ENCODE measurements at regions of chr11 and their contacts with region 1.

Region 1: GRCh38 chr11:47932544-47932943 is 47.8 kb upstream of the PTPRJ start:
- DNase-seq: no peak
- H3K4me3 ChIP-seq: no peak overlapping the region
- H3K27ac ChIP-seq: no peak overlapping the region
- H3K27me3 ChIP-seq: no peaks in the 10 kb centered on the region
- CTCF ChIP-seq: no peak

Region 2: GRCh38 chr11:47917643-47918369 is 14.7 kb before region 1 on chr11:
- CTCF ChIA-PET with region 1: interaction called, 10 read pairs
- POLR2A ChIA-PET with region 1: interaction called, 4 read pairs
- DNase-seq: peak; percentile 98
- H3K4me3 ChIP-seq: peak overlapping the region; percentile 50
- H3K27ac ChIP-seq: peak overlapping the region; percentile 92
- H3K27me3 ChIP-seq: no peaks in the 10 kb centered on the region
- CTCF ChIP-seq: no peak

Region 3: DNA sequence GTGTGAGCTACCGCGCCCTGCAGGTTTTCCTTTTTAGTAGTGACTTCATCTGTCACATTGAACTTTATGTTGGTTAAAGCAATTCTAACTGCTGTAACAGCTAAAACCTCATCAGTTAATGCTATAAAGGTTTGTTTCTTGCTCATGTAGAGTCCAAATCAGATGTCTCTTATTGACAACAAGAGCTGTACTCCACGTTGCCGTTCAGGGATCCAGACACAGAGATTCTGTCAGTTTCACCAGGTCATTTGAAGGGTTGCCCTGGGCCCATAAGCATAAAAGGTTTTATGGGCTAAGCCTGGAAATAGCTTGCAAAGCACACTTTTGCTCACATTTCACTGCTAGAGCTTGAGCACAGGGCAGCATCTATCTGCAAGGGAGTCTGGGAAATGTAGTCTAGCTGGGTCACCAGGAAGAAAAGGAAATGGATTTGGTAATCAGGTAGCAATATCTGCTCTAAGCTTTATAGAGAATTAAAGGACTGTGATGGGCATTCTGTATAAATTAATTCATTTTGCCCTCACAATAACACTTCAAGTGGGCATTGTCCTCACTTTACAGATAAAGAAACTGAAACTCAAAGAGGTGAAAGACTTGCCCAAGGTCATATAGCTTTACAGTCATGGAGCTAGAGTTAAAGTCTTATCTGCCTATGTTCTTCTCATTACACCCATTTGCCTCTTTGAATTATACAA is 22.7 kb after region 1 on chr11:
- CTCF ChIA-PET with region 1: interaction called, 14 read pairs
- POLR2A ChIA-PET with region 1: no interaction called
- DNase-seq: no peak
- H3K4me3 ChIP-seq: no peak overlapping the region
- H3K27ac ChIP-seq: no peak overlapping the region
- H3K27me3 ChIP-seq: no peaks in the 10 kb centered on the region
- CTCF ChIP-seq: no peak

Region 4: DNA sequence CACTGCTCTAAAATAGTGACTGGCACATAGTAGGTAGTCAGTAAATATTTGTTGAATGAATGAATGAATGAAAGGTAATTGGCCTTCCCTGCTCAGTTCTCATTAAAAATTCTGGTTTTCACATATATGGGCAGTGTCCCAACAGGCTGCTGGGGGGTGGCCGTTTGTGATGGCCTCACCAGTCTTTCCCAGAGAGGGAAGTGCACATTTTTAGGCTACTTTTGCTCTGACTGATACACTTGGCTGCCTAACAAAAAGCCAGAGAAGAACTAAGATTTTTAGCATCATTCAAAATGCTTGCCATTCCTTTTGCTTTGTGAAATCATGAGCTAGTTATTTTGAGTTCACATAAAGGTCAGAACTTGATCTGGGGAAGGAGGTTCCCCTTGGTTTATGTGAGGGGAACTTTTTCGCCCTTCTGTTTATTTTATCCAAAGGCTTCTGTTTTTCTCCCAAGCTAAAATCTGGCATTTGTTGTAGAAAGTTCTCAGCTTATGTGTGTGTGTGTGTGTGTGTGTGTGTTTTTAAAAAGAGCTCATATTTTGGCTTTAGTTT is 131.0 kb after region 1 on chr11:
- CTCF ChIA-PET with region 1: interaction called, 22 read pairs
- POLR2A ChIA-PET with region 1: interaction called, 10 read pairs
- DNase-seq: peak; percentile 97
- H3K4me3 ChIP-seq: no peak overlapping the region
- H3K27ac ChIP-seq: peak overlapping the region; percentile 94
- H3K27me3 ChIP-seq: no peaks in the 10 kb centered on the region
- CTCF ChIP-seq: no peak

Region 5: DNA sequence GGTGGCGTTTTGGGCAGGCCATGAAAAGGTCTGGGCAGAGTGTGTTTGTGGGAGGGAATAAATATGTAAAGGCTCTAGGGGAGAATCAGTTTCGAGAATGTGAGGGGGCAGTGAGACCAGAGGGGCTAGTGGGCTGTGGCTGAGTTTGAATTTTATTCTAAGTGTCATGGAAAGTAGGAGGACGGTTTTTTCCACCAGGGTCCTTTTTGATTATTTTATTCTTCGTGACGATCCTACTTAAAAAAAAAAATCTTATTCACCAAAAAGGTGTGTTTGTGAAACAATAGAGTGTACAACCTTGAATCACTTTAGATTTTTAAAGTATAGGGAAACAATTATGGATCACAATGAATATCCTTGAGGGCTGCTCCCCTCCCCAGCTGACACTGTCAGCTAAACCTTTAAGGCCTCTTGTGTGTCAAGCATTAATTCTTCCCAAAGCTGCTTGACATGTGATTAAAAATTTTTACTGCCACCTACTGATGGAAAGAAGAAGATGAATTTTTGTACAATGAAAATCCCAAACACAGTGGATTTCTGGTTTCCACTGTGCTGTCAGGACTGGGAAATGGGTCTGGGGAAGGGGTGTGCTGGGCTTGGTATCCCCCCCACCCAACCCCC is 176.6 kb after region 1 on chr11:
- CTCF ChIA-PET with region 1: interaction called, 315 read pairs
- POLR2A ChIA-PET with region 1: interaction called, 3 read pairs
- DNase-seq: no peak
- H3K4me3 ChIP-seq: no peak overlapping the region
- H3K27ac ChIP-seq: no peak overlapping the region
- H3K27me3 ChIP-seq: no peaks in the 10 kb centered on the region
- CTCF ChIP-seq: peak; percentile 51

Measured in AG04450 (cell line).